ENCODE measurements at regions of chr12 and their contacts with region 1.

Region 1: DNA sequence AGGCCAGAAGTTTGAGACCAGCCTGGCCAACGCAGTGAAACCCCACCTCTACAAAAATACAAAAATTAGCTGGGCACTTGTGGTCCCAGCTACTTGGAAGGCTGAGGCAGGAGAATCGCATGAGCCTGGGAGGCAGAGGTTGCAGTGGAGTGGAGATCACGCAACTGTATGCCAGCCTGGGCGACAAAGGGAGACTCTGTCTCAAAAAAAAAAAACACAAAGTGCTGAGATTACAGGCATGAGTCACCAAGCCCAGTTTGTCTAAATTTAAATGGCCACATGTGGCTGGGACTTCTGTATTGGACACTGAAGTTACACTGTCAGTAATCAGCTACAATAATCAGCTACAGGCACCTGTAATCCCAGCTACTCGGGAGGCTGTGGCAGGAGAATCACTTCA is 100.9 kb upstream of the AEBP2 start:
- DNase-seq: no peak
- H3K4me3 ChIP-seq: no peak overlapping the region
- H3K27ac ChIP-seq: no peak overlapping the region
- H3K4me1 ChIP-seq: no peaks in the 10 kb centered on the region
- H3K27me3 ChIP-seq: no peaks in the 10 kb centered on the region
- CTCF ChIP-seq: no peak

Region 2: GRCh38 chr12:19410211-19410610 is 71.8 kb after region 1 on chr12:
- CTCF ChIA-PET with region 1: no interaction called
- POLR2A ChIA-PET with region 1: interaction called, 10 read pairs
- intact Hi-C with region 1: no loop called
- DNase-seq: peak; percentile 81
- H3K4me3 ChIP-seq: no peak overlapping the region
- H3K27ac ChIP-seq: peak overlapping the region; percentile 66
- H3K4me1 ChIP-seq: peaks cover 28% of the 10 kb centered on the region
- H3K27me3 ChIP-seq: no peaks in the 10 kb centered on the region
- CTCF ChIP-seq: no peak

Region 3: DNA sequence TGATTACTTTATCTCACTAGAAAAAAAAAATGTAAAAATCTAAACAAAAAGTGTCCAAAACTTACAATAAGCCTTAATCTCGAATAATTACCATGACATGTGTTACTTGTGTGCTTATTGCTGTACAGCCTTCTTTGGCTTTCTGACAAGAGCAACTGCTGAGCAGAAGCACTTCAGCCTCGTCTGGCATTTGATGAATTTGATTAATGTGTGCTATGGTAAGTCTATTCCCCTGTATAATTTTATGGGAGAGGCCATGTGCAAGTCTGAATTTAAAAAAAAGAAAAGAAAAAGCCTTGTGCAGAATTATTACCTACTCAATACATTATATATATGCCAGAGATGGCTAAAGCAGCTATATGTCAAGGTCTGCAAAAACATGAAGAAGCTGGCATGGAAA is 214.8 kb after region 1 on chr12:
- CTCF ChIA-PET with region 1: no interaction called
- POLR2A ChIA-PET with region 1: no interaction called
- intact Hi-C with region 1: no loop called
- DNase-seq: peak; percentile 65
- H3K4me3 ChIP-seq: no peak overlapping the region
- H3K27ac ChIP-seq: no peak overlapping the region
- H3K4me1 ChIP-seq: peaks cover 17% of the 10 kb centered on the region
- H3K27me3 ChIP-seq: no peaks in the 10 kb centered on the region
- CTCF ChIP-seq: no peak

Measured in A673 (cell line).